Activated T-helper 2 cell treated with anti-CD3 and anti-CD28 coated beads, Interferon-gamma antibody, Interleukin-2, Interleukin-4, amounts not matched to agents 10 μg/mL and 5 μg/mL and 100 μg/mL, durations not matched to agents 14 hours and 24 hours and 36 hours (primary cell): ENCODE measurements at regions of chr15 and their contacts with region 1.

Region 1: GRCh38 chr15:64622410-64623260 is 152.8 kb downstream of the RBPMS2 start:
- DNase-seq: peak; percentile 60
- H3K4me3 Mint-ChIP-seq: peak overlapping the region; percentile 59
- H3K27ac Mint-ChIP-seq: peak overlapping the region; percentile 92
- H3K4me1 Mint-ChIP-seq: peaks cover 74% of the 10 kb centered on the region
- H3K27me3 Mint-ChIP-seq: no peaks in the 10 kb centered on the region

Region 2: GRCh38 chr15:64558460-64559179 is 64.0 kb before region 1 on chr15:
- intact Hi-C with region 1: no loop called
- DNase-seq: no peak
- H3K4me3 Mint-ChIP-seq: no peak overlapping the region
- H3K27ac Mint-ChIP-seq: peak overlapping the region; percentile 21
- H3K4me1 Mint-ChIP-seq: peaks cover 29% of the 10 kb centered on the region
- H3K27me3 Mint-ChIP-seq: no peaks in the 10 kb centered on the region

Region 3: DNA sequence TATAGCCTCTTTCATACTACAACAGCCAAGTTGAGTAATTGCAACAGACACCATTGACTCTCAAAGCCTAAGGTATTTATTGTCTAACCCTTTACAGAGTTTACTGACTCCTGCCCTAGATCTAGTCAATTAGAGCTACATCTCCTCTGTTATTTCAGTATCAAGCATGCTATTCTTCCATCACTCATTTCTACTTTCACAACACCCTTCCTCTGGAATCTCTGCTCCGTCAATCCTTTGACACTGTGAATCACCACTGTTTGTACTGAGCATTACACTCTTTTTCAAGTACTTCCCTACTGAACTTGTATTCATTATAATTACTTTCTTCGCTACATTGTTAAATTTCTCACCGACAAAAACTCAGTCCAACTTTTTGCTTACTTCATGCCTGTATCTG is 40.4 kb before region 1 on chr15:
- intact Hi-C with region 1: loop called (anchors 5 kb)
- DNase-seq: no peak
- H3K4me3 Mint-ChIP-seq: no peak overlapping the region
- H3K27ac Mint-ChIP-seq: peak overlapping the region; percentile 38
- H3K4me1 Mint-ChIP-seq: peaks cover 33% of the 10 kb centered on the region
- H3K27me3 Mint-ChIP-seq: no peaks in the 10 kb centered on the region

Region 4: GRCh38 chr15:64634576-64635498 is 12.2 kb after region 1 on chr15:
- intact Hi-C with region 1: loop called (anchors 1 kb)
- DNase-seq: peak; percentile 23
- H3K4me3 Mint-ChIP-seq: peak overlapping the region; percentile 54
- H3K27ac Mint-ChIP-seq: peak overlapping the region; percentile 85
- H3K4me1 Mint-ChIP-seq: peaks cover 57% of the 10 kb centered on the region
- H3K27me3 Mint-ChIP-seq: no peaks in the 10 kb centered on the region

Region 5: DNA sequence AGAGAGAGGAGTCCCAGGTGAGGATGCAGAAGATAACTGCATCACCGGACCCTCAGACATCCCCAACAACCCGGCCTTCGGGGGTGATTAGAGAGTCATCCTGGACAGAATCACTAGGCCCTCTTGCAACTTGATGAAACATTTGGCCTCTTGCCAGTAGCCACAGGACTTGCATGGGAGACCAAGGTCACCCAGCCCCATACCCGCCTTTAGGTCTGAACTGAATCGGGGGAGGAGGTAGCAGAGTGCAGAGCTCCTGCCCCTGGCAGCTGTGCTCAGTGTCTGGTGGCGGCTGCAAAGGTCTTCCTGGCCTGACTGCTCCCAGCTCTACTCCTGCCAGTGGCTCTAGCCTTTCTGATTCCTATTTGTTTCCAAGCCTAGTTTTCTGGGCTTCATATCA is 190.4 kb after region 1 on chr15:
- intact Hi-C with region 1: no loop called
- DNase-seq: no peak
- H3K4me3 Mint-ChIP-seq: no peak overlapping the region
- H3K27ac Mint-ChIP-seq: no peak overlapping the region
- H3K4me1 Mint-ChIP-seq: peaks cover 3% of the 10 kb centered on the region
- H3K27me3 Mint-ChIP-seq: peaks cover 7% of the 10 kb centered on the region